ENCODE measurements at regions of chr3 and their contacts with region 1.

Region 1: GRCh38 chr3:188244395-188244861 is 90.5 kb downstream of the LPP start:
- DNase-seq: peak; percentile 76
- H3K4me3 ChIP-seq: peak overlapping the region; percentile 21
- H3K27ac ChIP-seq: peak overlapping the region; percentile 98
- H3K4me1 ChIP-seq: peaks cover 96% of the 10 kb centered on the region
- CTCF ChIP-seq: no peak

Region 2: GRCh38 chr3:187738331-187739093 is 505.9 kb before region 1 on chr3:
- CTCF ChIA-PET with region 1: interaction called, 3 read pairs
- POLR2A ChIA-PET with region 1: interaction called, 3 read pairs
- intact Hi-C with region 1: loop called (anchors 1 kb)
- DNase-seq: peak; percentile 76
- H3K4me3 ChIP-seq: peak overlapping the region; percentile 86
- H3K27ac ChIP-seq: peak overlapping the region; percentile 90
- H3K4me1 ChIP-seq: peaks cover 60% of the 10 kb centered on the region
- CTCF ChIP-seq: peak; percentile 86

Region 3: GRCh38 chr3:187822402-187822801 is 422.0 kb before region 1 on chr3:
- CTCF ChIA-PET with region 1: no interaction called
- POLR2A ChIA-PET with region 1: no interaction called
- intact Hi-C with region 1: no loop called
- DNase-seq: peak; percentile 41
- H3K4me3 ChIP-seq: no peak overlapping the region
- H3K27ac ChIP-seq: no peak overlapping the region
- H3K4me1 ChIP-seq: peaks cover 37% of the 10 kb centered on the region
- CTCF ChIP-seq: no peak

Region 4: DNA sequence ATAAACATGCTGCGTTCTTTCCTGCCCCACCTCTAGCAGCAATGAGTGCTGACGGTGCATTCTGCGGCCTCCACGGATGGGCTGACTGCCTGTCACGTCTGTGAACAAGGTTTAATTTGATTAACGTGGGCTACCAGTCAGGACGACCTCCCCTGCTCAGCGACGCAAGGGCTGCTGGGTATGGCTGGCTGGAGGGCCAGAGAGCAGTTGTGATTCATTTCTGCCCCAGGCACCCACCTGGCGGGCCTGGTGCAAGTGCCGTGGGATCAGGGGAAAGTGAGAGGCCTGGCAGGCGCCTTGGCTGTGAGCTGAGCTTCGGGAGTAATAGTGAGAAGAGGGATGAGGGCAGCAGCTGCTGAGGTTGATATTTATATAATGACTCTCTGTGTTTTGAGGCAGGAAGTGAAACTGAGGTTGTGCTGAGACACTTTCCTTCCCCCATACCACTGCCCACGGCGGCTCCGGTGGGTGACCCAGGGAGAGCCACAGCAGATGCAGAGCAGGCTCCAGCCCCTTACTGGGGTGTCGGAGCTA is 308.7 kb before region 1 on chr3:
- CTCF ChIA-PET with region 1: no interaction called
- POLR2A ChIA-PET with region 1: interaction called, 74 read pairs
- intact Hi-C with region 1: no loop called
- DNase-seq: peak; percentile 91
- H3K4me3 ChIP-seq: peak overlapping the region; percentile 25
- H3K27ac ChIP-seq: peak overlapping the region; percentile 99
- H3K4me1 ChIP-seq: peaks cover 100% of the 10 kb centered on the region
- CTCF ChIP-seq: no peak

Region 5: DNA sequence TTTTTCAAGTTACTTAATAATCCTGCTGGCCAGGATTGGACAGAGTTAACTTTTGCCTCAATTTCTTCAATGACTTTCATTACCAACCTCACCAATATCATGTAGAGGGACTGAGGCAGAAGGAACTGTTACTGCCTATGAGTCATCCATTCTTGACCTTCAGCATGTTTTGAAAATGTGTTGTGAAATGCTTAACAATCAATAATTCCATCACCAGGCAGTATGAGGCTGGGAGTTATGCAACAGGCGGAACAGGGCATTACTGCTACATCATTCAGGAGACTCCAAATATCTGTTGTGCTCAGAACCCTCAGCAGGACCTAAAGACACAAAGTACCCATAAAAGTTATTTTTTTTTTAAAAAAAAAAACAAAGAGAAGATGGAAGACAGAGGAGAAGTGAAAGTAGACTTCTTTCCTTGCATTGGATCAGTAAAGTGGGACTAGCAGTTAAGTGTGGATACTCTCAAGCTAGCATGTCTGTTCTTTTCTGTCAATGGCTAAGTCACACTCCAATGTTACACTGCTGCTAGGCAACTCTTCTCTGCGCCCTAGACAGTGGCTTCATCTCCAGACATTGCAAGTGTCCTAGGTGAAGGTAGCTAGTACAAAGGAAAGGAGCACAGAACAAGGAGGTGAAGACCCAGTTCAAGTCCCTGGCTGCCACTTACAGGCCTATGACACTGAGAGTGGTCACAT is 275.4 kb before region 1 on chr3:
- CTCF ChIA-PET with region 1: no interaction called
- POLR2A ChIA-PET with region 1: interaction called, 53 read pairs
- intact Hi-C with region 1: loop called (anchors 1 kb)
- DNase-seq: no peak
- H3K4me3 ChIP-seq: peak overlapping the region; percentile 41
- H3K27ac ChIP-seq: peak overlapping the region; percentile 99
- H3K4me1 ChIP-seq: peaks cover 99% of the 10 kb centered on the region
- CTCF ChIP-seq: no peak; the same call in 1 of the 2 replicates

Region 6: DNA sequence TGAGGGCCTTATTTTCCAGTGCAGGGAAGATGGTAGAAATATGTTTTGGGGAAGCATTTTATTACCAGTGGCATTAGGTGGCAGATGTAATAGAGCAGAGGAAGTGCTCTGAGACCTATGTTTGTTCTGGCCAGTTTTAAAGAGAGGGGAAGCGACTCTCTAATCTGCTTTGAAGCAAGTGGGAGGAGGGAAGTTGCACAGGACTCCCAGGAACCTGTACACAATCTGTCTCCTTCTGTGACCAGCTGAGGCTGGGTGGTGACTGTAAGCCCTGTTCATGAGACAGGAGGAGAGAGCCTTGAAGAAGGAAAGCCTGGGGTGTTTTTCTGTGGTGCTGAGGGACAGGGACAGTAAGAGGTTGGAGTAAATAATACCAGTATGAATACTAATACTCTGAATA is 30.0 kb before region 1 on chr3:
- CTCF ChIA-PET with region 1: interaction called, 3 read pairs
- POLR2A ChIA-PET with region 1: interaction called, 14 read pairs
- intact Hi-C with region 1: loop called (anchors 1 kb)
- DNase-seq: peak; percentile 82
- H3K4me3 ChIP-seq: peak overlapping the region; percentile 47
- H3K27ac ChIP-seq: peak overlapping the region; percentile 98
- H3K4me1 ChIP-seq: peaks cover 80% of the 10 kb centered on the region
- CTCF ChIP-seq: no peak

Region 7: GRCh38 chr3:188446014-188446413 is 201.6 kb after region 1 on chr3:
- CTCF ChIA-PET with region 1: no interaction called
- POLR2A ChIA-PET with region 1: interaction called, 4 read pairs
- intact Hi-C with region 1: loop called (anchors 1 kb)
- DNase-seq: peak; percentile 90
- H3K4me3 ChIP-seq: peak overlapping the region; percentile 46
- H3K27ac ChIP-seq: peak overlapping the region; percentile 88
- H3K4me1 ChIP-seq: peaks cover 48% of the 10 kb centered on the region
- CTCF ChIP-seq: no peak

Region 8: GRCh38 chr3:188752850-188753249 is 508.4 kb after region 1 on chr3:
- CTCF ChIA-PET with region 1: no interaction called
- POLR2A ChIA-PET with region 1: interaction called, 3 read pairs
- intact Hi-C with region 1: loop called (anchors 1 kb)
- DNase-seq: peak; percentile 76
- H3K4me3 ChIP-seq: peak overlapping the region; percentile 54
- H3K27ac ChIP-seq: peak overlapping the region; percentile 89
- H3K4me1 ChIP-seq: peaks cover 68% of the 10 kb centered on the region
- CTCF ChIP-seq: no peak